Transverse colon (tissue), 4 donors: ENCODE measurements at regions of chr3 and their contacts with region 1.

Region 1: DNA sequence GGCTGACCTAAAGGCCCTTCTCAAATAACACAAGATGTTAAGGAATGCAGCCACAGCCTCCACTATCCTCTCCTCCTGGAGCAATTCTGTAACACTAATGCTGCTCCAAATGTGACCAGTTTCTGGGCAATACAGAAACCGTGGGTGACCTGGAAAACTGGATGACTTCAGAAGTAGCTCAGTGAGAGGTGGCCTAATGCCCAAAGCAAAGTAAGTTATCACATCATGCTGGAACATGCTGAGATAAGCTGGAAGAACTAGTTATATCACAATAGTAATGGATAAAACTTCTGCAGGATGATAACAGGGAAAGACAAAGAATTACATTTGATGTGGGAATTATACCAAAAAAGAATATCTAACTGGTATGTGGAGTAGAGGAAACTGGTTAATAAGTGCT is 72.0 kb downstream of the DHX30 start:
- DNase-seq: no peak
- H3K4me3 ChIP-seq: no peak overlapping the region
- H3K27ac ChIP-seq: no peak overlapping the region
- H3K4me1 ChIP-seq: no peaks in the 10 kb centered on the region
- H3K27me3 ChIP-seq: no peaks in the 10 kb centered on the region
- CTCF ChIP-seq: no peak
- EP300 ChIP-seq: no peak
- POLR2A ChIP-seq: no peak

Region 2: GRCh38 chr3:47852604-47853602 is 22.0 kb before region 1 on chr3:
- in situ Hi-C with region 1: no loop called
- intact Hi-C with region 1: loop called (anchors 1 kb)
- DNase-seq: no peak
- H3K4me3 ChIP-seq: no peak overlapping the region
- H3K27ac ChIP-seq: no peak overlapping the region
- H3K4me1 ChIP-seq: no peaks in the 10 kb centered on the region
- H3K27me3 ChIP-seq: no peaks in the 10 kb centered on the region
- CTCF ChIP-seq: no peak
- EP300 ChIP-seq: no peak
- POLR2A ChIP-seq: no peak